Activated naive CD4-positive, alpha-beta T cell treated with anti-CD3 and anti-CD28 coated beads, Interleukin-2, amount 10 ng/mL, durations not matched to agents 7 days and 5 days (primary cell): ENCODE measurements at regions of chr9 and their contacts with region 1.

Region 1: DNA sequence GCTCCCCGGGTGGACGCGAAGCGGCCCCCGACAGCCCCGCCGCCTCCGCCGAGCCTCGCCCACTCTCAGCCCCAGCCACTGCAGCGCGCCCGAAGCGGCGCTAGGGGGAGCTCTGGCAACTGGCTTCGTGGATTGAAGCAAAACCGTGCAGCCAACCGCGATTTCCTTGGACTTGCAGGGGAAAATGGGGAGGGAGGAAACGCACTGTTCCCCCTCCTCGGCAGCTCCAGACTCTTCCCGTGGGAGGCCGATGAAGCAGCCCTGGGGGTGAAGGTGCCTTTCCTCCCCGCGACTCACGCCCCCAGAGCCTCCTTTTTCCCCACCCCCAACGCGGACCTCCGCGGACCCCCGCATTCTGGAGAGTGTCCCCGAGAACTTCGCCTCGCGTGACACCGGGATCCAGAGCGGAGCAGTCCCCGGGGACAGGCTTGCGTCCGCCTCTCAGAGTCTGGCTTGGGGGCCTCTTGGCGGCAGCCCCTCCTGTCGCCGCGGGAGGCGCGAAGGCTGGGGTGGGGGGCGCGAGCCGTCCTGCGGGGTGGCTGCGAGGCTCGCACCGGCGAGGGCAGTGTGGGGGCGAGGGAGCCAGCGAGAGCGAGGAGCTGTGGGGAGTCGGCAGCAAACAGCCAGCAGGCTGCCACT is 3.9 kb downstream of the IER5L start:
- DNase-seq: peak; percentile 88
- H3K4me3 Mint-ChIP-seq: peak overlapping the region; percentile 71
- H3K27ac Mint-ChIP-seq: peak overlapping the region; percentile 42
- H3K4me1 Mint-ChIP-seq: peaks cover 32% of the 10 kb centered on the region
- H3K27me3 Mint-ChIP-seq: peaks cover 78% of the 10 kb centered on the region

Region 2: DNA sequence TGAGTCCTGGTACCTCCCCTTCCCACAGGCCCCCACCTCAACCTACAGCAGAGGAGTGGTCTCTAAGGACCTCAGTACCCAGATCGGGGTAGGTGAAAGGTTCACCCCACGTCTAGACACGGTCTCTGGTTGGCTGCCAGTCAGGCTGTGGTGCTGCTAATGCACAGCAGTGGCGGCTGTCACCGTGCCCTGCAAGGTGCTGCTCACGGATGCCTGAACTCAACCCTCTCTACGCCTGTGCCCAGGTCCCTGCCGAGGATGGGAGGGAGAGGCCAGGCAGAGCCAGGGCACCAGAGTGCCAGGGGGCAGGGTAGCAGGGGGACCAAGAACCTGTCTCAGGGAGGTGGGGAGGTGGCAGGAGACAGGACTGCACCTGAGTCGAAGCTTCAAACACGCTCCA is 10.5 kb before region 1 on chr9:
- CTCF ChIA-PET with region 1: no interaction called
- DNase-seq: no peak
- H3K4me3 Mint-ChIP-seq: no peak overlapping the region
- H3K27ac Mint-ChIP-seq: no peak overlapping the region
- H3K4me1 Mint-ChIP-seq: peaks cover 24% of the 10 kb centered on the region
- H3K27me3 Mint-ChIP-seq: no peaks in the 10 kb centered on the region

Region 3: DNA sequence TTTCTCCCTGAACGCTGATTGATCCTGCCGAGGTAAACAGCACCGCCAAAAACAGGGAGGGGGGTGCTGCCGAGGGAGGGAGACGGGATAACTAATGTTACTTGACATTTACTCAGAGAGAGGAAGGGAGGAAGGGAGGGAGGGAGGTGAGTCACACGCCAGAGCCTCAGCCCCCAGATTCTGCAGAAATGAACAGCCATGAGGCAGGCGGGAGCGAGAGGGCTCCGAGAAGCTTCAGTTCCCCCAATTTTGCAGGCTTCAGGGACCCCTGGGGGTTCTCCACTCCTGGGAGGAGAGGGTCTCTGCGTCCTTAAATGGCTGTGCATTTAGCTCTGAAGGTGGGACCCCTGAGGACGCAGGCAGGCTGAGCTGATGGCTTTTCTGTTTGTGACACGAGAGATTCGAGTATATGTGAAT is 63.0 kb after region 1 on chr9:
- CTCF ChIA-PET with region 1: interaction called, 12 read pairs
- DNase-seq: peak; percentile 57
- H3K4me3 Mint-ChIP-seq: peak overlapping the region; percentile 72
- H3K27ac Mint-ChIP-seq: peak overlapping the region; percentile 84
- H3K4me1 Mint-ChIP-seq: peaks cover 59% of the 10 kb centered on the region
- H3K27me3 Mint-ChIP-seq: peaks cover 14% of the 10 kb centered on the region

Region 4: GRCh38 chr9:129373361-129373760 is 199.2 kb after region 1 on chr9:
- CTCF ChIA-PET with region 1: no interaction called
- DNase-seq: no peak
- H3K4me3 Mint-ChIP-seq: no peak overlapping the region
- H3K27ac Mint-ChIP-seq: no peak overlapping the region
- H3K4me1 Mint-ChIP-seq: no peaks in the 10 kb centered on the region
- H3K27me3 Mint-ChIP-seq: peaks cover 29% of the 10 kb centered on the region

Region 5: GRCh38 chr9:129610473-129611301 is 436.5 kb after region 1 on chr9:
- CTCF ChIA-PET with region 1: interaction called, 12 read pairs
- DNase-seq: peak; percentile 80
- H3K4me3 Mint-ChIP-seq: peak overlapping the region; percentile 64
- H3K27ac Mint-ChIP-seq: no peak overlapping the region
- H3K4me1 Mint-ChIP-seq: peaks cover 47% of the 10 kb centered on the region
- H3K27me3 Mint-ChIP-seq: peaks cover 53% of the 10 kb centered on the region